ENCODE measurements at regions of chr14 and their contacts with region 1.

Region 1: DNA sequence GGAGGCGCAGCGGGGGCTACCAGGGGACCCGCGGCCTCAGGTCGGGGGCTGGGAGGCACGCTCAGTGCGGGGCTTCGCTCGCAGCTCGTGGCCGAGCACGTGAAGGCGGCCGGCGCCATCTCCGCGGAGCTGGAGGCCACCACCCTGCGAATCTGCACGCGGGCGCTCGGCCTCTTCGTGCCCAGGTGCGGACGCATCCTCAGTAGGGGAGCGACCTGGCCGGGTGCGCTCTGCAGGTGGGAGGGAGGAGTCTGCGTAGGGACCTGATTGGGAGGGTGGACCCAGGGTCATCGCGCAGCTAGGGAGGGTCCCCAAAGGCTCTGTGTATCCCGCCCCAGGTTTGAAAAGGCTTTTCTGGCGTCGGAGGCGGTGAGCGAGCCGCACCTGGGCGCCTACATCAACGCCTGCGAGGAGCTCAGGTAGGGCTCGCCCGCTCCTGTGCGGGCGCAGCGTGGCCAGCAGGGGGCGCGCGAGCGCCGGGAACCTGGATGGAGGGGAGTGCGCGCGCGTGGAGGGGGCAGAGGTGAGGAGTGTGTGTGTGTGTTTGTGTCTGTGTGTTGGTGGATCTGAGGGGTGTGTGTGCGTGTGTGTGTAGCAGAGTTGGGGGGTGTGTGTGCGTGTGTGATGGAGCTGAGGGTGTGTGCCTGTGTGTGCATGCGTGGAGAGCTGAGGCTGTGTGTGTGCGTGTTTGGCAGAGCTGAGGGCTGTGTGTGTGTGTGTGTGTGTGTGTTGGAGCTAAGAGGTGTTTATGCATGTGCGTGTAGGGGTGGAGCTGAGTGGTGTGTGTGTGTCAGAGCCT is 10.3 kb downstream of the EXOC3L4 start:
- DNase-seq: peak; percentile 92
- H3K4me3 Mint-ChIP-seq: no peak overlapping the region
- H3K27ac Mint-ChIP-seq: no peak overlapping the region
- H3K4me1 Mint-ChIP-seq: peaks cover 4% of the 10 kb centered on the region
- H3K27me3 Mint-ChIP-seq: peaks cover 25% of the 10 kb centered on the region

Region 2: GRCh38 chr14:103141119-103141796 is 36.4 kb after region 1 on chr14:
- intact Hi-C with region 1: loop called (anchors 1 kb)
- DNase-seq: peak; percentile 75
- H3K4me3 Mint-ChIP-seq: no peak overlapping the region
- H3K27ac Mint-ChIP-seq: no peak overlapping the region
- H3K4me1 Mint-ChIP-seq: peaks cover 3% of the 10 kb centered on the region
- H3K27me3 Mint-ChIP-seq: peaks cover 31% of the 10 kb centered on the region

Region 3: GRCh38 chr14:103160866-103161391 is 56.1 kb after region 1 on chr14:
- intact Hi-C with region 1: no loop called
- DNase-seq: no peak
- H3K4me3 Mint-ChIP-seq: no peak overlapping the region
- H3K27ac Mint-ChIP-seq: no peak overlapping the region
- H3K4me1 Mint-ChIP-seq: no peaks in the 10 kb centered on the region
- H3K27me3 Mint-ChIP-seq: peaks cover 3% of the 10 kb centered on the region

Region 4: DNA sequence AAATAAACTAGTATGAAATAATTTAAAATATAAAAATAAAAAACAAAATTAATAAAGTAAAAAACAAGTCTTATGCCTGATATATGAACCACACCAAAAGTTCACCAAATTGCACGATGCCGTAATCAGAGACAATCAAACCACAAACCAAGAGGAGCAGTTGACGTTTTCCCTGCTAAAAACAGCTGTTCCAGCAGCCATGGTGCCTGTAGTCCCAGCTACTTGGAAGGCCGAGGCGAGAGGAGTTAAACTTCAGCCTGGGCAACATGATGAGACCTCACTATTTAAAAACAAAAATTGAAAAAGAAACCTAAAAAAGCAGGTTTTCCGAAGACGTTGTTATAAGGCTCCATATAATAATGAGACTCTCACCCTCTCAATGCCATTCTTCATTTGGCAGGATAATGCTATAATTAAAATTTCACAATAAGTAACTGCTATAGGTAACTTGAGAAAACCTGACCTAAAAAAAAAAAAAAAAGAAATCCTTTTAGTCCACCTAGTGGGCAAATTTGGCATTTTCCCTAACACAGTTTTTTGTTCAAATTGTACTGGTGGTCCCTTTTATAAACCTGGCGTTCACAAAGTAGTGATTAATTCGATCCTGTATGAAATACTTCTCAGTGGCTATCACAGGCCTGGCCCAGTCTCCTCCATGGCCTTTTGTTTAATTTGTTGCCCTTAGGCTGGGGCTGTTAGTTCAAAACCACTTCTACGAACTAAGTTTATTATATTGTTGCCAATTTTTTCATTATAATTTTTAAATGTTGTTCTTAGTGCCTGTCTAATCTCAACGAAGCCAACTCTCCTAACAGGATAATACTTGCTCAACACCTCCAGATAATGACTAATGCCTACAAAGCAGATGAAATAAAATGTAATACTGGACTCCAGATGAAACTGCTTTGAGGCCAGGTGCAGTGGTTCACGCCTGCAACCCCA is 80.5 kb after region 1 on chr14:
- intact Hi-C with region 1: loop called (anchors 5 kb)
- DNase-seq: peak; percentile 58
- H3K4me3 Mint-ChIP-seq: no peak overlapping the region
- H3K27ac Mint-ChIP-seq: no peak overlapping the region
- H3K4me1 Mint-ChIP-seq: no peaks in the 10 kb centered on the region
- H3K27me3 Mint-ChIP-seq: peaks cover 47% of the 10 kb centered on the region

Region 5: GRCh38 chr14:103292426-103293374 is 187.8 kb after region 1 on chr14:
- intact Hi-C with region 1: loop called (anchors 1 kb)
- DNase-seq: peak; percentile 92
- H3K4me3 Mint-ChIP-seq: no peak overlapping the region
- H3K27ac Mint-ChIP-seq: no peak overlapping the region
- H3K4me1 Mint-ChIP-seq: no peaks in the 10 kb centered on the region
- H3K27me3 Mint-ChIP-seq: peaks cover 18% of the 10 kb centered on the region

Measured in activated CD4-positive, alpha-beta T cell treated with anti-CD3 and anti-CD28 coated beads, Interleukin-2, amount 10 ng/mL, durations not matched to agents 24 days and 14 days (primary cell).